ENCODE measurements at regions of chr17 and their contacts with region 1.

Region 1: GRCh38 chr17:17783116-17783824 is 53.5 kb downstream of the SREBF1 start:
- DNase-seq: peak; percentile 79
- ATAC-seq: peak; percentile 13
- H3K4me3 Mint-ChIP-seq: peak overlapping the region; percentile 78
- H3K27ac Mint-ChIP-seq: no peak overlapping the region
- H3K4me1 Mint-ChIP-seq: peaks cover 51% of the 10 kb centered on the region
- H3K27me3 Mint-ChIP-seq: peaks cover 27% of the 10 kb centered on the region
- CTCF ChIP-seq: no peak

Region 2: DNA sequence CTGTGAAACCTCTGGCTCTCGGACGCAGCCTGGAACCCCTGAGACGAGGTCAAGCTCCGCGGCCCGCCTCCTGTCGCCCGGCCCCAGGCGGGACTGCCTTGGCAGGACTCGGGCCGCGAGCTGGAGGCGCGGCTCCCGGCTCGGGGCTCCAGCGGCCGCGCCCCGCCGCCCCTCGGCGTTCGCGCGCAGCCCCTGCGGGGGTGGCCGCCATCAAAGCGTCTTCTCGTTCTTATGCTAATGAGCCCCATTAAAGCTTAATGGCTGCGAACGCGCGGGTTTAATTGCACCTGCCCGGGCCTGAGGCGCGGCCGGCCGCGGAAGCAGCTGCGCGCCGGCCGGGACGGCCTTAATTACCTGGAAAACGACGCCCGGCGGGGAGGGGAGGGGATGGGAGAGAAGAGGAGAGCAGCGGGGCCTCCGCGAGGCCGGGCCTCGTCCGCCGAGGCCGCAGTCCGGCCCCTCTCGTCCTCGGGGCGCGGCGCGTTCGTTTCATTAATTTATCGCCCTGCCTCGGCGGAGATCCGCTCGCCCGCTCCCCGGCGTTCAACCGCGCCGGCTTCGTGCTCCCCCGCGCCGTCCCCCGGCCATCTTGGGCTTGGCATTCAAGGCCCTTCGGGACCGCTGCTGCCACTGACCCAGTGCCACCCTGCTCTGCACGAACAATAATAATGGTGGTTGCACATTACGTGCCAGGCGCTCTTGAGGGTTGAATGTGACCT is 82.9 kb before region 1 on chr17:
- CTCF ChIA-PET with region 1: interaction called, 10 read pairs
- POLR2A ChIA-PET with region 1: no interaction called
- DNase-seq: peak; percentile 83
- ATAC-seq: peak; percentile 73
- H3K4me3 Mint-ChIP-seq: peak overlapping the region; percentile 57
- H3K27ac Mint-ChIP-seq: no peak overlapping the region
- H3K4me1 Mint-ChIP-seq: peaks cover 58% of the 10 kb centered on the region
- H3K27me3 Mint-ChIP-seq: peaks cover 99% of the 10 kb centered on the region
- CTCF ChIP-seq: no peak

Region 3: GRCh38 chr17:17724307-17725010 is 58.8 kb before region 1 on chr17:
- CTCF ChIA-PET with region 1: interaction called, 10 read pairs
- POLR2A ChIA-PET with region 1: no interaction called
- DNase-seq: peak; percentile 66
- ATAC-seq: peak; percentile 54
- H3K4me3 Mint-ChIP-seq: peak overlapping the region; percentile 81
- H3K27ac Mint-ChIP-seq: no peak overlapping the region
- H3K4me1 Mint-ChIP-seq: peaks cover 43% of the 10 kb centered on the region
- H3K27me3 Mint-ChIP-seq: peaks cover 98% of the 10 kb centered on the region
- CTCF ChIP-seq: no peak

Region 4: DNA sequence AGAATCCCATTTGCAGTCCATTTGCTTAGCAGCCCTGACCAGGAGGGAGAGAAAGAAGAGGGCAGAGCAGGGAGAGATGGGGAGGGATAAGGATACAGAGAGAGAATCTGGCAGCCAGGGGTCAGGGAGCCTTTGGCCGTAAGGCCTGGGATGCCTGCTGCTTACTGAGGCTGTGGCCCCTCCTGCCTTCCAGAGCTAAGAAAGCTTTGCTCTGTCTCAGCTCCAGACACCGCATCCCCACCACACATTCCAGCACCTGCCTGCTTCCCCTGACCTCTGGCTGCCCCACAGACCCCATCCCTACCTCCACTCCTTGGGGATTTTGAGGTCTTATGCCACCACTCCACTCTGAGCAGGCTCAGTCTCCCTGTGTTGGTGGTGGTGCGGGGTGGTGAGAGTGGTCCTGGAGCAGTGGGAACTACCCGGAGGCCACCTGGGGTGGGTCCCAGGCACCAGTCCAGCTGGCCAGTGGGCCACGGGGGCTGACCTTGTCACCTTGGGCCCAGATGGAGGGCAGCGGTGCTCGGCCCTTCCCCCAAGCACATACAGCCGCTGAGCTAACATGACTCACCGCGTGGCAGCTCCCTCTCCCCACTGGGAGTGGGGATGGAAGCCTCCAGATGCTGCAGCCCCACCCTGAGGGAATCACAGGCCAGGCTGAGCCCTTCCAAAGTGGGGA is 43.7 kb before region 1 on chr17:
- CTCF ChIA-PET with region 1: interaction called, 13 read pairs
- POLR2A ChIA-PET with region 1: no interaction called
- DNase-seq: no peak
- ATAC-seq: no peak
- H3K4me3 Mint-ChIP-seq: no peak overlapping the region
- H3K27ac Mint-ChIP-seq: no peak overlapping the region
- H3K4me1 Mint-ChIP-seq: peaks cover 39% of the 10 kb centered on the region
- H3K27me3 Mint-ChIP-seq: peaks cover 20% of the 10 kb centered on the region
- CTCF ChIP-seq: no peak

Region 5: DNA sequence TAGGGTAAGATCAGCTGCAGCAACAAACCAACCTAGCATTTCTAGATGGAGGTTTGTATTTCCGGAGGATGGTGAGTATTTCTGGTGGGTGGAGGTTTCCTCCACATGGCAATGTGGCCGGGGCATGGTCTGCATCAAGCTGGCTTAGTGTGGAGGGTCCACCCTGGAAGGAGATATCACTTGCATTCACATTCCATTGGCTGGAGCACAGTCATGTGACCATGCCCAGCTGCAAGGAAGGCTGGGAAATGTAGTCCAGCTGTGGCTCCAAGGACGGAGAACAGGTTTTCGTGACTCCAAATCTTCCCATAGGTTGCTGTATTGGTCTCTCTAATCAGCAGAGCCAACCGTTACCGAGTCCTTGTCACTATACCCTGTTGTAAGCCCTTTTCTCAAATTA is 33.3 kb before region 1 on chr17:
- CTCF ChIA-PET with region 1: interaction called, 18 read pairs
- POLR2A ChIA-PET with region 1: interaction called, 5 read pairs
- DNase-seq: peak; percentile 86
- ATAC-seq: peak; percentile 56
- H3K4me3 Mint-ChIP-seq: peak overlapping the region; percentile 14; the same call in 1 of the 2 replicates
- H3K27ac Mint-ChIP-seq: peak overlapping the region; percentile 91
- H3K4me1 Mint-ChIP-seq: peaks cover 54% of the 10 kb centered on the region
- H3K27me3 Mint-ChIP-seq: no peaks in the 10 kb centered on the region
- CTCF ChIP-seq: no peak

Region 6: GRCh38 chr17:17800504-17801021 is 17.3 kb after region 1 on chr17:
- CTCF ChIA-PET with region 1: interaction called, 12 read pairs
- POLR2A ChIA-PET with region 1: no interaction called
- DNase-seq: no peak
- ATAC-seq: peak; percentile 26
- H3K4me3 Mint-ChIP-seq: no peak overlapping the region
- H3K27ac Mint-ChIP-seq: no peak overlapping the region
- H3K4me1 Mint-ChIP-seq: peaks cover 13% of the 10 kb centered on the region
- H3K27me3 Mint-ChIP-seq: no peaks in the 10 kb centered on the region; the same call in 1 of the 2 replicates
- CTCF ChIP-seq: no peak

Region 7: DNA sequence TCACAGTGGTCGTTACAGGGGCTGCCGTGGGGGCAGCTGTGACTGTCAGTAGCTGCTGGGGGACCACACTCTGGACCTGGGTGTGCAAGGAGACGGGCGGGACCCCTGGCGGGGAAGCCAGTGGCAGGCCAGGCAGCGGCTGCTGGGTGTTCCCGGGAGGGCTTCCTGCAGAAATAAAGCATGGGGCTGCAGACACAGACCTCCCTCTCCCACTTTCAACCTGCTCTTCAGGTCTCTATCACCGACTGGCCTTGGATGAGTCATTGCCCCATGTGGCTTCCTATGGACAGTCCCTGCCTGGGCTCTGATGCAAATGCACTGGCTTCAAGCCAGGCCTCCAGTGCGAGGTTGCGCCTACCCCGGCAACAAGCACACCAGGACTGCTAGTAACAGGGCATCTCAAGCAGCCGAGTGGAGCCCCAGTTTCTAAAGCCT is 36.3 kb after region 1 on chr17:
- CTCF ChIA-PET with region 1: no interaction called
- POLR2A ChIA-PET with region 1: no interaction called
- DNase-seq: no peak
- ATAC-seq: no peak
- H3K4me3 Mint-ChIP-seq: no peak overlapping the region
- H3K27ac Mint-ChIP-seq: no peak overlapping the region
- H3K4me1 Mint-ChIP-seq: peaks cover 49% of the 10 kb centered on the region
- H3K27me3 Mint-ChIP-seq: no peaks in the 10 kb centered on the region
- CTCF ChIP-seq: no peak

Region 8: GRCh38 chr17:17836250-17836817 is 53.1 kb after region 1 on chr17:
- CTCF ChIA-PET with region 1: interaction called, 4 read pairs
- POLR2A ChIA-PET with region 1: interaction called, 11 read pairs
- DNase-seq: peak; percentile 98
- ATAC-seq: peak; percentile 53
- H3K4me3 Mint-ChIP-seq: peak overlapping the region; percentile 69
- H3K27ac Mint-ChIP-seq: peak overlapping the region; percentile 94
- H3K4me1 Mint-ChIP-seq: peaks cover 70% of the 10 kb centered on the region
- H3K27me3 Mint-ChIP-seq: no peaks in the 10 kb centered on the region
- CTCF ChIP-seq: no peak